Right ventricle myocardium inferior (tissue), 1 donor: ENCODE measurements at regions of chr17 and their contacts with region 1.

Region 1: GRCh38 chr17:31524926-31525800 is 133.7 kb downstream of the RAB11FIP4 start:
- DNase-seq: peak; percentile 93
- ATAC-seq: peak; percentile 74

Region 2: GRCh38 chr17:31388770-31389661 is 136.1 kb before region 1 on chr17:
- intact Hi-C with region 1: loop called (anchors 5 kb)
- DNase-seq: no peak
- ATAC-seq: no peak

Region 3: DNA sequence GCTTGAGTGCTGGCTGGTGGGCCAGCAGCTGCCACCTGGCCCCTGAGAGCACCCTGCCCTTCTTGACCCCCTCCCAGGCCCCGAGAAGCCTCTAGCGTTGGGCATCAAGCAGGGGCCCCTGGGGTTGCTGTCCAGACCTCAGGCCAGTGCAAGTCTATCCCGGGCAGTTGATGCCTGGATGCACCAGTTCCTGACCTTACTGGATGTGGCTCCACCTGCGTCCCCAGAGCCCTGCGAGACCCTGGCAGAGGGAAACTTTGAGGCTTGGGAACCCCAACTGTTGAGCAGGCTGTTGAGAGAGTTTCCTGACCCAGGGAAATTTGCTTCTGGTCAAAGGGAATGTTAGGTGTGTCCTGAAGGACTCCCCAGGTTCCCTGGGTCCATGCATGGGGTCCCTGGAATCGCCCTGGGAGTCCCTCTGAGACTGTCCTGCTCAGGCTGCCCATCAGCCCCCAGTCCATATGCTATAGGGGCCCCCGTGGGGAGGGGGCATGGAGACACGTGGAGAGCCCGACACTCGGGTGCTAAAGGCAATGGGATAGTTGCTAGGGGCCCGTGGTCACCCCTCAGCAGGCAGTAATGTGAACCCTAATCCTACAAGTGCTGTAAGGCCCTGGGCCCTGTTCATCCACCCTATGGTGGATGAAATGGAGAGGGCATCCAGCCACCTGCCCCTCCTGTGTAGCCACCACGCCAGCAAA is 87.3 kb before region 1 on chr17:
- intact Hi-C with region 1: loop called (anchors 1 kb)
- DNase-seq: no peak
- ATAC-seq: no peak